OCI-LY7 (cell line): ENCODE measurements at regions of chr5 and their contacts with region 1.

Region 1: DNA sequence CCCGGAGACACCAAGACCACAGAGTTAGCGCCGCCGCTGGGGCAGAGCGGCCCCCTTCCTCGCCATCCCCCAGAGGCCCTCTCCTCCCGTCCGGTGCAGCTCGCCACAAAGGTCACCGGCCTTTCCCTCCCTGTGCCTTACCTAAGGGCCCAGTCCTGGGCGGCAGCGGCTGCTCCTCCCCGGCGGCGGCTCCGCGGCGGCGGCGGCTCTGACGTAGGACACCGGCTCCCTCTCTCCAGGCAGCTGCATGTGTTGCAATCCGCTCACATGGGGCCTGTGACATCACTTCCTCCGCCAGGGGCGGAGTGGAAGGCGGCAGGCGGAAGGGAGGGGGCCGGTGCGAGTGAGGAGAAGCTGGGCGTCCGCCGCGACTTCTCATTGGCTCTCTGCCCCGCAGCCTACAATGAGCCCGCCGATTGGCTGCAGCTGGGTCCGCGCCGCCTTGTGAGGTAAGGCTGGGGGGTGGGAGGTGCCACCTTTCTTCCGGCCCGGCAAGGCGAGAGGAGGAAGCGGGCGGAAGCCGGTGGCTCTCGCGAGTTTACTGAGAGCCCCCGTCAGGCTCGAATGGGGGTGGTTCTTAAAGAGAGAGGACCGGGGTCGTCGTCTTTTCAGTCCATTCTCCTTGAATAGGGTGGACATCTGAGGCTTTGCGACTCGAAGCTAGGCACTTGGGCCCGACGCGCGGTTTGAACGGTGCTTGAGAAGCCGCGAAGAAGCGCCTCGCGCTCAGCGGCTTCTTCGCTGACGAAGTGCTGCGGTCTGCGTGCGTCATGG is at the start of gene ETF1:
- DNase-seq: peak; percentile 99
- H3K4me3 ChIP-seq: peak within 1 kb of the TSS; percentile 95
- H3K27ac ChIP-seq: peak within 1 kb of the TSS; percentile 62
- H3K4me1 ChIP-seq: peaks cover 39% of the 10 kb centered on the region
- CTCF ChIP-seq: no peak
- total RNA-seq, gene ETF1: 66.7 and 76.0 TPM in 2 replicates

Region 2: DNA sequence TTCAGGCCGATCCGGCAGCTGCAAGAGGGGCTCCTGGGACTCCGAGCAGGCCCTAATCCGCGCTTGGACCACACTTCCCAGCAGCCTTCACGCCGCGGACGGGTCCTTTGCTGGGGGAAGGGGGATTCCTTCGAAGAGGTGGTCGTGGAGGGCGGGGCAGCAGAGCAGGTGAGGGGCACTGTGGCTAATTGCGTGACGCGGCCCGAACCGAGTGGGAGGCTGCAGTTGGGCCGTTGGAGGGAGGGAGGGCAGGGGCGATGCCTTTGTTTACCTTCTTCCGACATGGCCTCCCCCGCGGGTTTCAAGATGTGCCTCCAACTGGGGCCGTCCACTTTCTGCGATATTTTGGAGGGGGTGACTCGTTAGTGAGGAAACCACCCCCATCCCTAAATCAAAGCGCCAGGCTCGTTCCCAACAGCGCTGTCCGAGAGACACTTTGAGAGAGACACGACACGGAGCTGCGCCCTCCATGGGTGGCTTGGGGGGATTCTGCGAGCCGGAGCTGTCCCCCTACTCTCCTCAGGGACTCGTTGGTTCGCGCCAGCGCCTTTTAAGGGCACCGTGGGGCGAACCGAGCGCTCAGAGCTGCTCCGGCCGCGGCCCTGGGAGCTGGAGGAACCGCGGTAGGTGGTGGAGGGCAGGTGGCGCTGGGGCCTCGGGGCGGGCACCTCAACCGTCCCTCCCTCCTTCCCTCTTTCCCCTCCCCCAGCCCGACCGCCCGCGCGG is 205.3 kb before region 1 on chr5 and contains the start of gene FAM53C:
- CTCF ChIA-PET with region 1: no interaction called
- POLR2A ChIA-PET with region 1: interaction called, 3 read pairs
- intact Hi-C with region 1: loop called (anchors 5 kb)
- DNase-seq: peak; percentile 96
- H3K4me3 ChIP-seq: peak within 1 kb of the TSS; percentile 89
- H3K27ac ChIP-seq: peak within 1 kb of the TSS; percentile 67
- H3K4me1 ChIP-seq: peaks cover 26% of the 10 kb centered on the region
- CTCF ChIP-seq: 0 out of 2 replicates have a peak, but pooled peaks have one; percentile 23
- total RNA-seq, gene FAM53C: 38.4 and 42.3 TPM in 2 replicates

Region 3: GRCh38 chr5:138352071-138352721 is 190.9 kb before region 1 on chr5 and contains the start of gene KDM3B:
- CTCF ChIA-PET with region 1: no interaction called
- POLR2A ChIA-PET with region 1: interaction called, 4 read pairs
- intact Hi-C with region 1: loop called (anchors 5 kb)
- DNase-seq: peak; percentile 90
- H3K4me3 ChIP-seq: peak within 1 kb of the TSS; percentile 98
- H3K27ac ChIP-seq: peak within 1 kb of the TSS; percentile 73
- H3K4me1 ChIP-seq: peaks cover 19% of the 10 kb centered on the region
- CTCF ChIP-seq: peak; percentile 91
- total RNA-seq, gene KDM3B: 51.1 and 57.1 TPM in 2 replicates

Region 4: GRCh38 chr5:138464008-138464387 is 79.1 kb before region 1 on chr5:
- CTCF ChIA-PET with region 1: no interaction called
- POLR2A ChIA-PET with region 1: interaction called, 4 read pairs
- intact Hi-C with region 1: loop called (anchors 1 kb)
- DNase-seq: peak; percentile 95
- H3K4me3 ChIP-seq: peak overlapping the region; percentile 74
- H3K27ac ChIP-seq: peak overlapping the region; percentile 76
- H3K4me1 ChIP-seq: peaks cover 34% of the 10 kb centered on the region
- CTCF ChIP-seq: peak; percentile 85